Activated B cell treated with CpG ODN at 0.5 μM for 24 hours (primary cell): ENCODE measurements at regions of chr1 and their contacts with region 1.

Region 1: DNA sequence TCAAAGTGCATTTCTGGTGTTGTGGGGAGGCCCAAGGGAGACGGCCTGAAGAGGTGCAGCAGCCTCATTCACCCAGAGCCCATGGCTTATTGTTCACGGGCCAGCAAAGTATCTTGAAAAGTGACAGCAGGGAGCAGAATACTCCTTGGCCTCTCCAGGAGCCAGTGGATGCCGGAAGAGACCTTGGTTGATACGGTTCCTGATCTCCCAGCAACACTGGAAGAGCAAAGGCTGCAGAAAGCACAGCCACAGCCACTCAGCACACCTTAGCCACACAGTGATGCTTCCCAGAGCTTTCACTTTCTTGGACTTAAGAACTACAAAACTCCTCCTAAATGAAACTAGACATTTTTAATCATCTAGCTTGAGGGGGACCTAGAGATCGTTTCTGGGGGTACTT is 64.3 kb upstream of the TENT5C start:
- DNase-seq: no peak
- ATAC-seq: no peak
- H3K4me3 Mint-ChIP-seq: no peak overlapping the region
- H3K27ac Mint-ChIP-seq: no peak overlapping the region
- H3K4me1 Mint-ChIP-seq: peaks cover 2% of the 10 kb centered on the region
- H3K27me3 Mint-ChIP-seq: no peaks in the 10 kb centered on the region
- CTCF ChIP-seq: no peak

Region 2: DNA sequence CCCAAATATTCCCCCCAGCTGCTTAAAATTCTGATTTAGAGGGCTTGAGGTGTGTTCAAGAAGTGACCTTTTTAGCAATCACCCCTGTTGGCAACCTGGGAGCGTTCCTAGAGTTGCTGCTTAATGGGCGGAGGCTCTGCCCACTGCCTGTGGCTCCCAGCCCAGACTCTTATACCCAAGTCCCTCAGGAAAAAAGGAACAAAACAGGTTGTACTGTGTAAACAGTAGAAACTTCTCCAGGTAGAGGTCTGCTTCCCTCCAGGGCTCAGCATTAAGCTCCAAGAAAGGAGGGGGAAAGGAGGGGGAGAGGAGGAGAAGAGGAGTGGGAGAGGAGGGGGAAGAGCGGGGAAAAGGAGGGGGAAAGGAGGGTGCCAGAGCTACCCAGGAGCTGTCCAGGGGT is 49.7 kb after region 1 on chr1:
- CTCF ChIA-PET with region 1: interaction called, 3 read pairs
- POLR2A ChIA-PET with region 1: interaction called, 11 read pairs
- intact Hi-C with region 1: no loop called
- DNase-seq: peak; percentile 0
- ATAC-seq: no peak
- H3K4me3 Mint-ChIP-seq: no peak overlapping the region
- H3K27ac Mint-ChIP-seq: no peak overlapping the region
- H3K4me1 Mint-ChIP-seq: peaks cover 19% of the 10 kb centered on the region
- H3K27me3 Mint-ChIP-seq: no peaks in the 10 kb centered on the region
- CTCF ChIP-seq: no peak

Region 3: DNA sequence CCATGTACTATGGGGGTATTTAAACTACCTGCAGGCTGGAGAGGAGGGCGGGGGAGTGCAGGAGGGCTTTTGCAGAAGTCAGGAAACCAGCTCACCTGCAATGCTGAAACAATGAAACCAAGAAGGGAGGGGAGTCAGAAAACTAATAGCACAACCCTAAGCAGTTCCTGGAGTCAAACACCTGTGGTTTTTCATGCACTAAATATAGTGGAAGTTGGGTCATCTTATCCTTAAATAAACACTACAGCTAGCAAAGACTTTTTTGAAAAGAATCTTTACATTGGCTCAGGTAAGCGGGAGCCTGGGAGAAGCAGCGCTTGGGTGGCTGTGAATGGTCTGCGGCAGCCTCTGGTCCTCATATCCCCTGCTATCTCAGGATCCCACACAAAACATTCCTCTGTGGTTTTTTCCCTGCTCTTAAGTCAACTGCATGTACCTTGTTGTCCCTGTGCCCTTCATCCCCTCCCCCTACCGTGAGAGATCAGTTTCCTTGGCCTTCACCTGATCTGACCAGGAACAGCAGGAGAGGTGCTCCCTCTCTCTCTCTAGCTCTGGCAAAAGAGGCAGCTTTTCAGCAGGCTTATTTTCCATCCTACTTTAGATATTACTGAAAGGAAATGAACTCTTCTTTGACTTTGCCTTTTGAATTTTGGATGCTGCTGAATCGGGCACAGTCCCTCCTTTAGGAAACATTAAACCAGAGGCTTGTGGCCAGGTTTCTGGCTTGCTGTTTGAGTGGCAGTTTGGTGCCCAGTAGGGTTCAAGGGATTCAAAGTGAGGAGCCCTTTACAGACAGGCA is 90.9 kb after region 1 on chr1:
- CTCF ChIA-PET with region 1: no interaction called
- POLR2A ChIA-PET with region 1: no interaction called
- intact Hi-C with region 1: no loop called
- DNase-seq: no peak
- ATAC-seq: no peak
- H3K4me3 Mint-ChIP-seq: peak overlapping the region; percentile 15
- H3K27ac Mint-ChIP-seq: no peak overlapping the region
- H3K4me1 Mint-ChIP-seq: peaks cover 95% of the 10 kb centered on the region
- H3K27me3 Mint-ChIP-seq: no peaks in the 10 kb centered on the region
- CTCF ChIP-seq: no peak